Activated CD4-positive, alpha-beta T cell treated with anti-CD3 and anti-CD28 coated beads for 36 hours (primary cell): ENCODE measurements at regions of chr16 and their contacts with region 1.

Region 1: DNA sequence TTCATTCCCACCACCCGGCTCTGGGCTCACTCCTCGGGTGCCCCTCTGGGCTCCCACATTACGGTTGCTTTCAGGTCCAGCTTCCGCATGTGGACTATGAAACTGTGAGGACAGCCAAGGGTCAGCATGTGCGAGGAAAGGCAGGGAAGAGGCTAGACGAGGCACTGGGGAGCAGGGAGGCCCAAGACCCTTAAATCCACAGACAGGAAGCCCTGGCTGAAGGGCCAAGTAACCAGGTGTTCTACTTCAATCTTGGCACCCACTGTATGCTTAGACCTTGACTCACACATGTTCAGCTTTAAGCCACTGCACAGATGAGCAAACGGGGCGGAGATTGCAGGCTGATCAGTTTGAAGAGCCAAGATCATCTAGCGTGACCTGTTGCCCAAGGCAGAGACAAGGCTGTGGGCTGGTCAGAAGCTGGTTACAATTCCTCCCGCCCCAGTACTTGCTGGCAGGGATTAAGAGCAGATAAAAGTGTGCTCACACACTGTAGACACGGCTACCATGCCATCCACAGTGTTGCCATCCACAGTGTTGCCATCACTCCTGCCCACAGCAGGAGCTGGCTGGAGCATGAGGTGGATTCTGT is at the start of gene CES4A:
- DNase-seq: peak; percentile 47
- ATAC-seq: no peak
- H3K4me3 Mint-ChIP-seq: peak within 1 kb of the TSS; percentile 1
- H3K27ac Mint-ChIP-seq: peak within 1 kb of the TSS; percentile 75
- H3K4me1 Mint-ChIP-seq: peaks cover 30% of the 10 kb centered on the region
- H3K27me3 Mint-ChIP-seq: no peaks in the 10 kb centered on the region
- total RNA-seq, gene CES4A: 13.5 to 15.7 TPM

Region 2: GRCh38 chr16:66959704-66960161 is 28.6 kb before region 1 on chr16:
- CTCF ChIA-PET with region 1: interaction called, 10 read pairs
- POLR2A ChIA-PET with region 1: no interaction called
- intact Hi-C with region 1: no loop called
- DNase-seq: no peak
- ATAC-seq: no peak
- H3K4me3 Mint-ChIP-seq: no peak overlapping the region
- H3K27ac Mint-ChIP-seq: no peak overlapping the region
- H3K4me1 Mint-ChIP-seq: peaks cover 13% of the 10 kb centered on the region
- H3K27me3 Mint-ChIP-seq: no peaks in the 10 kb centered on the region

Region 3: DNA sequence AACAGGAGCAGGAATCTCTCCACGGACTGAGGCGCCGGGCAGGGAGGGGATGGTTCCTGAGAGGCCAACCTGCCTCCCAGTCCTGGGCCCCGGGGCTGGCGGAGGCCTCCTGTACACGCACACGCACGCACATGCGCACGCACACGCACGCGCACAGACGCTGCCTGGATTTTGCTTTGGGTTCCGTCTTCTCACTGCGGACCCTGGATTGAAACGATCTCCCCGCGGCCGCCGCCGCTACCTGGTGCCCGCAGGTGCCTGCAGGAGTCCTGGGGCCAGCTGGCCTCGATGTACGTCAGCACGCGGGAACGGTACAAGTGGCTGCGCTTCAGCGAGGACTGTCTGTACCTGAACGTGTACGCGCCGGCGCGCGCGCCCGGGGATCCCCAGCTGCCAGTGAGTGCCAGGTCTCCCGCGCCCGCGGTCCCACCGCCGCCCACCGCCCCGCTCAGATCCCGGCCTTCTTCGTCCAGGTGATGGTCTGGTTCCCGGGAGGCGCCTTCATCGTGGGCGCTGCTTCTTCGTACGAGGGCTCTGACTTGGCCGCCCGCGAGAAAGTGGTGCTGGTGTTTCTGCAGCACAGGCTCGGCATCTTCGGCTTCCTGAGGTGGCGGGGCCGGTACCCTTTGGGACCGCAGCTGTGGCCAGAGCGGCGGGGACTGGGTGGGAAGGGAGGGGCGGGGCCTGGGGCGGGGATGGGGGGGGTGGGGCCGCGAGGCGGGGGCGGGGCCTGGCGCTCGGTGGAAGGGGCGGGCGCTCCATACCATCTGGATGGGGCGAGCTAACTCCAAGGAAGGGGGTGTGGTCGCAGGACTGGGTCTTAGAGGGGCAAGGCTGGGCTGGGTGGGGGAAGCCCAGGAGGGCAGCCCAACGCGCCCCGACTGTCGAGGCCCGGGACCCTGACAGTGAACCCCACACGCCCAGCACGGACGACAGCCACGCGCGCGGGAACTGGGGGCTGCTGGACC is 12.4 kb after region 1 on chr16:
- CTCF ChIA-PET with region 1: interaction called, 5 read pairs
- POLR2A ChIA-PET with region 1: no interaction called
- intact Hi-C with region 1: loop called (anchors 1 to 2 kb)
- DNase-seq: peak; percentile 79
- ATAC-seq: peak; percentile 80
- H3K4me3 Mint-ChIP-seq: peak overlapping the region; percentile 74
- H3K27ac Mint-ChIP-seq: peak overlapping the region; percentile 87
- H3K4me1 Mint-ChIP-seq: peaks cover 15% of the 10 kb centered on the region
- H3K27me3 Mint-ChIP-seq: no peaks in the 10 kb centered on the region

Region 4: GRCh38 chr16:67055712-67056487 is 67.6 kb after region 1 on chr16:
- CTCF ChIA-PET with region 1: no interaction called
- POLR2A ChIA-PET with region 1: no interaction called
- intact Hi-C with region 1: loop called (anchors 2 kb)
- DNase-seq: peak; percentile 34
- ATAC-seq: peak; percentile 89
- H3K4me3 Mint-ChIP-seq: peak overlapping the region; percentile 6
- H3K27ac Mint-ChIP-seq: peak overlapping the region; percentile 84
- H3K4me1 Mint-ChIP-seq: peaks cover 50% of the 10 kb centered on the region
- H3K27me3 Mint-ChIP-seq: no peaks in the 10 kb centered on the region

Region 5: GRCh38 chr16:67296422-67296821 is 308.1 kb after region 1 on chr16:
- CTCF ChIA-PET with region 1: no interaction called
- POLR2A ChIA-PET with region 1: no interaction called
- intact Hi-C with region 1: no loop called
- DNase-seq: no peak
- ATAC-seq: no peak
- H3K4me3 Mint-ChIP-seq: no peak overlapping the region
- H3K27ac Mint-ChIP-seq: no peak overlapping the region
- H3K4me1 Mint-ChIP-seq: no peaks in the 10 kb centered on the region
- H3K27me3 Mint-ChIP-seq: peaks cover 5% of the 10 kb centered on the region

Region 6: DNA sequence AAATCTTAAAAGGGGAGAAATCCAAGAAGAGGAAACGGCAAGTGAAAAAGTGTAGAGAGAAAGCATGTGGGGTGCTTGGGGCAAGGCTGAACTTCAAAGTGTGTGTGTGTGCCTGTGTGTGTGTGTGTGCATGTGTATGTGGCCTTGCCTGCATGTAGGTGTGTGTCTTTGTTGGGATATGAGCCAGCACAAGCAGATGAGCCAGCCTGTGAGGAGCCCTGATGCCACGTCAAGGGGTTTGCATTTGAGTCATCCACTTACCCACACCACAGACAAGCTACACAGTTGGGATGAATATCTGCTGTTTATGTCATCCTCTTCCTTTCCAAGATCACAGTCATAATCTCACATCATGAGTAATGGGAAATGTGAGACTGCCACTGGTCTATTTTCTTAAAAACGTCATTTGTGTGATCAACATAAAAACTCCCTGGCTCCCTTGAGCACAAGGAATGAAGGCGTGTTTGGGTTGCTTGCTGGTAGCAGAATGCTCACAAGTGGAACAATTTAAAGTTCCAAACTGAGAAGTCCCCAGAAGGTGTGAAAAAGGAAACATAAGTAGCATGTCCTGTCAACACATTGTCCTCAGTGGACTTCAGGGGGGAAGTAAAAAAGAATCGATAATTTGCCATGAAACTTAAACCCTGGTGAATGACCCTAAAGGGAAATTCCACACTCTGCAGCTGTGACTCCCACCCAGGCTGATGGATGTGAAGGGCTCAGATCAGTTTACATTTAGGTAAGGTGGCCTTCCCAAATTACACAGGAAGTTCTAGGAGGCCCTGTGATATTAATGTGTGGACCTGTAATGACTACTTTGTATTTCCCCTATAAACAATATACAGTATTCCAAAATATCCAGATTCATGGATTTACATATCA is 323.6 kb after region 1 on chr16:
- CTCF ChIA-PET with region 1: no interaction called
- POLR2A ChIA-PET with region 1: interaction called, 3 read pairs
- intact Hi-C with region 1: loop called (anchors 1 to 5 kb)
- DNase-seq: peak; percentile 94
- ATAC-seq: peak; percentile 98
- H3K4me3 Mint-ChIP-seq: peak overlapping the region; percentile 1
- H3K27ac Mint-ChIP-seq: peak overlapping the region; percentile 98
- H3K4me1 Mint-ChIP-seq: peaks cover 40% of the 10 kb centered on the region
- H3K27me3 Mint-ChIP-seq: peaks cover 1% of the 10 kb centered on the region

Region 7: DNA sequence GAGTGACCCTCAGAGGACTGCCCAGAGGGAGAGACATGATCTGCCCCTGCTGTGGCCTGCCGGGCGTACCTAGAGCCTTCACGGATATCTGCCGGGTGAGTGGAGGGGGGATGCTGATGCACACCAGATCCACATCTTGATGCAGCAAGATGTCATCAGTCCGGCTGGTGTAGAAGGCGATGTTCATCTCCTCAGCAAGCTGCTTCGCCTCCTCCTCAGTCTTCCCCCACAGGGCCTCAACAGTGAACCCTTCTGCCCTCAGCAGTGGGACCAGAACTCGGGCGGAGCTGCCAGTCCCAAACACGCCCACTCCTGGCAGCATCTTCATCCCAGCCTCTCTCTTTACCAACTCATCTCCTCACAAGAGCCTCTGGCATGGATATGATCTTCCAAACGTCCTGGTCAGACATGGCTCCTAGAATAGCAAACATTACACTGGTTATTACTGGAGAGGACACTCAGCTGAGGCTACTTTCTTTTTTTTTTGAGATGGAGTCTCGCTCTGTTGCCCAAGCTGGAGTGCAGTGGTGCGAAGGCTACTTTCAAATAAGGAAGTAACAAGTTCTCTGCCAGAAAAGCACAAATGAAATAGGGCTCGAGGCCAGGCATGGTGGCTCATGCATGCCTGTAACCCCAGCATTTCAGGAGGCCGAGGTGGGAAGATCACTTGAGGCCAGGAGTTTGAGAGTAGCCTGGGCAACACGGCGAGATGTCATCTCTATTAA is 697.3 kb after region 1 on chr16:
- CTCF ChIA-PET with region 1: no interaction called
- POLR2A ChIA-PET with region 1: no interaction called
- intact Hi-C with region 1: no loop called
- DNase-seq: no peak
- ATAC-seq: no peak
- H3K4me3 Mint-ChIP-seq: no peak overlapping the region
- H3K27ac Mint-ChIP-seq: no peak overlapping the region
- H3K4me1 Mint-ChIP-seq: peaks cover 8% of the 10 kb centered on the region
- H3K27me3 Mint-ChIP-seq: no peaks in the 10 kb centered on the region